Activated CD4-positive, alpha-beta T cell treated with anti-CD3 and anti-CD28 coated beads for 36 hours (primary cell): ENCODE measurements at regions of chr11 and their contacts with region 1.

Region 1: DNA sequence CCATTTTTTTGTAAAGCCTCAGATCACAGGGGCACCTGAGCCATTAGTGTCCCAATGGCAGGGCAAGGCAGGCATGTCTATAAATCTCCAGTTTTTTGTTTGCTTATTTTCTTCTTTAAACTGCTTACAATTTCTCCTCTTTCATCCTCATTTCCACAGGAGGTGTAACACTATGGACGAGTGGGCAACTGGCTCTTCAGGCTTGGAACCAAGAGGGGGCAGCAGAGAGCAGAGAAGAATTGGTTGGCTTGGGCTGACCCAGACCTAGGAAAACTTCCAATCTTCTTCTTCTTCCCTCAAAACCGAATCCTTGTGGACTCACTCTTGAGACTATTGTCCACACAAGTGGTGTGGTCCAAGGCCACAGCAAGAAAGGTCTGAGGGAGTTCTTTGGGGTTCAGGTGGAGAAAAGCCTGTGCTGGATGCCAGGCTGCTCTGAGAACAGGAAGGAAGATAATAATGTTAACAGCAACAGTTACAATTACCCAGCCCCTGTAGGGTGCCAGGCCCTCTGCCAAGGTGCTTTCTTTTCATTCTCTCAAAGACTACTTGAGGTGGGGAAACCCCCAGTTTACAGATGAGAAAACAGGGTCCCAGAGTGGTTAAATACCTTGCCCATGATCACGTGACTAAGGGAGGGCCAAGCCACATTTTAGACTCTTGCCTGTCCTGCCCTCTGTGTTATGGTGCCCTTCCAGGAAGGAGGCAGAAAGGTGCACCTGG is 70.7 kb upstream of the E2F8 start:
- DNase-seq: peak; percentile 72
- ATAC-seq: peak; percentile 74
- H3K4me3 Mint-ChIP-seq: no peak overlapping the region
- H3K27ac Mint-ChIP-seq: no peak overlapping the region
- H3K4me1 Mint-ChIP-seq: no peaks in the 10 kb centered on the region
- H3K27me3 Mint-ChIP-seq: peaks cover 2% of the 10 kb centered on the region

Region 2: GRCh38 chr11:19460718-19461405 is 149.4 kb after region 1 on chr11:
- CTCF ChIA-PET with region 1: no interaction called
- POLR2A ChIA-PET with region 1: no interaction called
- intact Hi-C with region 1: loop called in 1 of 2 experiments (anchors 5 kb)
- DNase-seq: no peak
- ATAC-seq: no peak
- H3K4me3 Mint-ChIP-seq: no peak overlapping the region
- H3K27ac Mint-ChIP-seq: no peak overlapping the region
- H3K4me1 Mint-ChIP-seq: no peaks in the 10 kb centered on the region
- H3K27me3 Mint-ChIP-seq: peaks cover 28% of the 10 kb centered on the region

Region 3: DNA sequence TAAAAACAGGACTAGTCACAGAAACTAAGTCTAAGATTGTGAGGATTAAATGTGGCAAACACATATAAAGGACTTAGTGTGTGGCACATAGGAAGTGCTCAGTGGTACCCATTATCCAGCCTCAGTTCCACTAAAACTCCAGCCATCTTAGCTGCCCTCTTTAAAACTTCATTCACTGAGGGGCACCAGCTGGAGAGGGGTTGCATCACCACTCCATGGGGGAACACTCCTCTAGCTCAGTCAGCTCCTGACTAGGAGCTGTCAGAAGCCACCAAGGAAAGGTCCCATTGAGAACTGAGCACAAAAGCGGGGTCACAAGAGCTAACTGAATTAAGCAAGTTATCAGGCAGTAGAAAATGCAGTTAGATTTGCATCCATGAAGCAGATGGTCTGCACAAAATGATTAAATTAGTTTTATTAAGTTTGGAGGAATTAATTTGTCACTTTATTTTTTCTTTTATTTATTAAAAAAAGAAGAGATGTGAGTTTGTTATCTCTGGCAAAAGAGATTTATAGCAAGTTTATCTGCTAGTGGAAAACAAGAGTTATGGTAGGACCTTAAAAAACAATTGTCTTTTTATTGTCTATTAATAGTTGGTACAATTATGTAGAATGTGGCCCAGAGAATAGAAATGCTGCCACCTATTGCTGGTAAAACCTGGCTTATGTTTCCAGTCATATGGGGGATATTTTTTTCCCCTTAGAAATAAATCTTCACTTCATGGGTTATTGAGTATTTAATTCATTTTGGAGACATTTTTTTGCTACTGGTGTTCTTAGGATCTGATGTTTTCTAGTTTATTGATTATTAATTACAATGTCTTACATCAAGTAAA is 496.8 kb after region 1 on chr11:
- CTCF ChIA-PET with region 1: no interaction called
- POLR2A ChIA-PET with region 1: no interaction called
- intact Hi-C with region 1: no loop called
- DNase-seq: no peak
- ATAC-seq: no peak
- H3K4me3 Mint-ChIP-seq: no peak overlapping the region
- H3K27ac Mint-ChIP-seq: no peak overlapping the region
- H3K4me1 Mint-ChIP-seq: no peaks in the 10 kb centered on the region
- H3K27me3 Mint-ChIP-seq: peaks cover 7% of the 10 kb centered on the region

Region 4: GRCh38 chr11:20114588-20114987 is 803.1 kb after region 1 on chr11:
- CTCF ChIA-PET with region 1: no interaction called
- POLR2A ChIA-PET with region 1: no interaction called
- intact Hi-C with region 1: no loop called
- DNase-seq: no peak
- ATAC-seq: no peak
- H3K4me3 Mint-ChIP-seq: no peak overlapping the region
- H3K27ac Mint-ChIP-seq: no peak overlapping the region
- H3K4me1 Mint-ChIP-seq: peaks cover 7% of the 10 kb centered on the region
- H3K27me3 Mint-ChIP-seq: peaks cover 15% of the 10 kb centered on the region